AG04450 (cell line): ENCODE measurements at regions of chr11 and their contacts with region 1.

Region 1: GRCh38 chr11:109853156-109853776 is 239.9 kb upstream of the ZC3H12C start:
- DNase-seq: peak; percentile 63
- H3K4me3 ChIP-seq: no peak overlapping the region
- H3K27ac ChIP-seq: no peak overlapping the region
- H3K27me3 ChIP-seq: no peaks in the 10 kb centered on the region
- CTCF ChIP-seq: peak; percentile 83

Region 2: DNA sequence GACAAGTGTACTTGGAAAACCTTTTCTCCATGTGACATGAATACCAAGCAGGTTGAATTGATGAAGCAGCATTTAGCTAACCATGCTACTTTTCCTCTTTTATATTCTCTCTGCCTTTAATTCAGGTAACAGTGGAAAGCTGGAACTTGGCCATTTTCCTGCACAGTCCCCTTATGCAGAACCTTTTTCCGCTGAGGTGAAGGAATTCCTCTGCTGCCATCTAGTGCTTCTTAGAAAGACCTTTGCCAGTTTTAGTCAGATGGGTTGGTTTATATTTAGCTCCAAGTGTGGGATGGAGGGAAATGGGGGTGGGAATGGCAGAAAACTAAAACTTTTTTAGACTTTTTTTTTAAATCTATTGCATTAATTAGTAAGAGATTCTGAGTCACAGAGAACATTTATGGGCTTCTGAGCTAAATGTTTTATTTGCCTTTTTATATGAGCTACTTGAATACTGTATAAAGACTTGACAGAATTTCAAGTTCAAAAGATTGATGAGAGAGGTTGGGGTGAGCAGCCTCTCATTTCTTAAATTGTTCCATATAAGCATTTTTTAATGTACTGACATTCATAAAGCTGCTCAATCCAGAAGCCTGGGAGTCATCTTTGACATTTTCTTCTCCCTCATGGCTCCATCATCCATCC is 86.0 kb after region 1 on chr11:
- CTCF ChIA-PET with region 1: interaction called, 115 read pairs
- POLR2A ChIA-PET with region 1: interaction called, 5 read pairs
- DNase-seq: peak; percentile 51
- H3K4me3 ChIP-seq: no peak overlapping the region
- H3K27ac ChIP-seq: no peak overlapping the region
- H3K27me3 ChIP-seq: no peaks in the 10 kb centered on the region
- CTCF ChIP-seq: peak; percentile 79